ENCODE measurements at regions of chr4 and their contacts with region 1.

Region 1: DNA sequence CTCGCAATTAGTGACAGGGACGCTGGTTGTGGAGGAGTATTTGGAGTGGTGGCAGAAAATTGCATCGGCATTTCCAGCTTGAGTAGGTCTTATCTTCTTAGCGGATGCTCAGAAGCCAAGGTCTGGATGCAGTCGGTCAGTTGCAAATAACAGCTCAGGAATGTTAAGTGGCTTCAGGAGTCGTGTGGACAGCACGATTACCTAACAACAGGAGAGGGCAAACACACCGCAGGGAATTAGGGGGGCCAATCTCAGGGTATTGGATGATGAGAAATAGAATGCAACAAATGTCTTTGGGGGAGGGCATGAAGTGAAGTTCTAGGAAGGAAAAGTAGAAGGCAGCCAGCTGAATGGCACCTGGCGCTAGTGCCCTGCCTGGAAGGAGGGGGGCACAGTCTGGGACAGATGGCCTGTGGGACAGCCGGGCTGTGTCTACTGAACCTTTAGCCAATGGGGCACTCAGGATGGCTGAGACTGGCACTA is 11.8 kb downstream of the RASL11B start:
- DNase-seq: no peak
- ATAC-seq: peak; percentile 20 to 41

Region 2: DNA sequence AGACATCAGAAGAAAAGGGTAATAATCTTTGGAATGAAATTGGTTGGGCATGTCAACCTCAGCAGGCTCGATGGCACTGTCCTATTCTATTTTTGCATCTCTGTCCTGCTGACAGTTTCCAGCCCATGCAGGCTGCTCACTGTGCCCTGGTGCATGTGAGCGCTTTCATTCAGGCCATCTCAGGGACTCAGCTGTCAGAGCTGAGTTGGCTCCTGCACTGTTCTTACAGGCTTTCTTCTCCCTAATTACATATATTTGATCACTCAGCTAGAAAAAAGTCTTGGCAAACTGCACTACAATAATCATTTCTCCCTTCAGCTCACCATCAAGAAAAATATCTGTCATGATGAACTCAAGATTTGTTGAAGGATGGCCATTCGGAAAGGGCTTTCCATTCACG is 73.0 kb after region 1 on chr4:
- intact Hi-C with region 1: loop called in 1 of 2 experiments (anchors 10 kb)
- DNase-seq: no peak
- ATAC-seq: peak; percentile 90 to 93

Region 3: DNA sequence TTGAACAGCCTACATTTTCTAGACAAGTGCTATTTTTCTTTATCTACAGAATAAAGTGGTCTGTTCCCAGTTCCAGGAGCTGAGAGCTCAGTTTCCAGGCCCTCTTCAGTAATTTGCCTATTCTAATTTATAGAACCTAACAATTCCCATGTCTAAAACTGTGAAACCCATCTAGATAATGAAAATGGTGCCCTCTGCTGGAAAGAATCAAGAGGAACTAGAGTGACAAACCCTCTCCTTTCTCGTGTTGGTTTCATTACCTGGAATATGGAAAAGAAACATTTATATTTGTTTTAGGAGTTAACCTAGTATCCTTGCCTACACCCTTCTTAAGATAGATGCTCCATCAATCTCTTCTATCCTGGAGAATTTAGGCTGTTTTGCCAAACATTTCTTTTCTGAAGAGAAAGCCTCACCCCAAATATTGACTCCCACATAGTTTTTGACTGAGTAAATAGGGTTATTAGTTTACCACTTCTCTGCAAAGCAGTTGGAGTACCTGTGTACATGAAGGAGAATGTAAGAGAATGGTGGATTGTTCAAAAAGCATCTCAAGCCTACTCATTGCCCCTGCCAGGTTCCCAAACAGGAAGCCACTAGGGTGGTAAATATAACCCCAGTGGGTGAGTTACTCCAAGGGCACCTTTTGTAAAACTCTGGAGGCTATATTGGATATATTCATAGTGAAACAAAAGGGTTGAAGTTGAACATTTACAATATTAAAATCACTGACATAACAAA is 109.8 kb after region 1 on chr4:
- intact Hi-C with region 1: no loop called
- DNase-seq: no peak
- ATAC-seq: peak; percentile 79 to 81

Measured in left cardiac atrium (tissue), 4 donors.